HepG2 (cell line): ENCODE measurements at regions of chr22 and their contacts with region 1.

Region 1: GRCh38 chr22:36232715-36233401 is 6.5 kb downstream of the APOL2 start:
- DNase-seq: no peak
- ATAC-seq: peak; percentile 51
- H3K4me3 ChIP-seq: peak overlapping the region in 1 of 3 experiments; percentile 9; a peak in 2 of 6 replicates
- H3K27ac ChIP-seq: peak overlapping the region; percentile 62
- H3K4me1 ChIP-seq: peaks cover 100% of the 10 kb centered on the region
- H3K27me3 ChIP-seq: no peaks in the 10 kb centered on the region
- CTCF ChIP-seq: no peak
- EP300 ChIP-seq: no peak
- POLR2A ChIP-seq: no peak; a peak in 1 of 4 replicates
- RAD21 ChIP-seq: no peak

Region 2: DNA sequence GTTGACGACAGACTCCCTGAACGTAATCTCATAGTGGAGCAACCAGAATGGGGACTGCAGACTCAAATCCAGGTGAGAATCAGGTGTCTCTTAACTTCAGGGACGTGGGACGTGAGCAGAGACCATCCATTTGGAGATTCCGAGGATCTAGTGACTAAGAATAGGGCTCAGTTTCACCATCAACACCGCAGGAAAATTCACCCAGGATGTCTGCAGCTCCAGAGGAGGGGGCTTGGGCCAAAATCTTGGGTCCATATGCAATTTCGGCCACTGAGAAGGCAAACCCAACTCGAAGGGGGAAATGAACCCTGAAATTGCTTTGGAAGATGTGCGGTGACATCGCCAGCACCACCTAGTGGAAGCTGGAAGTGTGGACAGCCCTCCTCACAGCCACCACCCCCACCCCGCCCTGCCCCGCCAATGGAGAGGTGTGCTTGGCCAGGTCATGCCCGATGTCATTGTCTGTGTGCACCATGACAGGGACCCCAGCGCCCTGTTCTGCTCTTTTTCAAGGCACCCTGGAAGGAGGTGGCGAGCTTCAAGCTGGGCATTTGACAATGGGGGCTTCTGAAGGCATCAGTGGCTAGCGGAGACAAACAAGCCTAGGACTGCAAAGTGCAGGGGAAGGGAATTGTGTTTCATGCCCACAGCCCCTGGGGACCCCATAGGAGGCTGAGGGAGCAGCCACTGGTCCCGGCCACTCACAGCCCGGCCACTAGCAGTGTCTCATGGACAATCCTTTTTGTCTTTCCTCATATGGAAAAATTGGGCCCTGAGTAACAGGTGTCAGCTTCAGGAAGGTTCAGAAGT is 44.8 kb after region 1 on chr22:
- CTCF ChIA-PET with region 1: no interaction called
- POLR2A ChIA-PET with region 1: no interaction called
- in situ Hi-C with region 1: loop called (anchors 10 kb)
- intact Hi-C with region 1: loop called (anchors 2 kb)
- DNase-seq: peak; percentile 61
- ATAC-seq: peak; percentile 78
- H3K4me3 ChIP-seq: no peak overlapping the region
- H3K27ac ChIP-seq: peak overlapping the region; percentile 78
- H3K4me1 ChIP-seq: peaks cover 47% of the 10 kb centered on the region
- H3K27me3 ChIP-seq: no peaks in the 10 kb centered on the region
- CTCF ChIP-seq: peak; percentile 82
- EP300 ChIP-seq: no peak
- POLR2A ChIP-seq: no peak
- RAD21 ChIP-seq: peak; percentile 70

Region 3: DNA sequence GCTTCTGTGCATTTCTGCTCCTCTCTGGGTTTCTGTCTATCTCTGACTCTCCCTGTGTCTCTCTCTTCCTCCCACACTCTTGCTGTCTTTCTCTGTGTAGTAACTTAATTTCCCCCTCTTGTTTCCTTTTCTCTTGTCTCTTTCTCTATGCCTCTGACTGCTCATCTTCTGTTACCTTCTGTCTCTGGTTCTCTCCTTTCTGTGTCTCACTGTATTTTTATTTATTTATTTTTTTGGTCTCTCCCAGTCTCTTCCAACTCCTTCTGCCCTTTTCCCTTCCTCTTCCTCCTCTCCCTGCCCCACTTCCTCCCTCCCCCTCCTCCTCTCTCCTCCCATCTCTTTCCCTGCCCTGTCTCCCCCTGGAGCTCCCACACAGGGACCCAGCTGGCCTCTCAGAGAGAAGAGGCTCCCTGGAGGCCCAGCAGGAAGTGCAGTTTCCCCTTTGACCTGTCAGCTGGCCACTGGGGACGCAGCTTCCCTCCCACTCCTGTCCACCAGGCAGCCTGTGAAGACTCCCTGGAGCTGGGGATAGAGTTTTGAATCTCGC is 193.2 kb after region 1 on chr22:
- CTCF ChIA-PET with region 1: no interaction called
- POLR2A ChIA-PET with region 1: no interaction called
- in situ Hi-C with region 1: no loop called
- intact Hi-C with region 1: no loop called
- DNase-seq: peak; percentile 74
- ATAC-seq: peak; percentile 93
- H3K4me3 ChIP-seq: no peak overlapping the region
- H3K27ac ChIP-seq: peak overlapping the region; percentile 71
- H3K4me1 ChIP-seq: peaks cover 69% of the 10 kb centered on the region
- H3K27me3 ChIP-seq: no peaks in the 10 kb centered on the region
- CTCF ChIP-seq: peak; percentile 53
- EP300 ChIP-seq: no peak; a peak in 1 of 4 replicates
- POLR2A ChIP-seq: peak in 1 of 2 experiments; percentile 34; a peak in 1 of 4 replicates
- RAD21 ChIP-seq: no peak